HCT116 (cell line): ENCODE measurements at regions of chr22 and their contacts with region 1.

Region 1: GRCh38 chr22:37792494-37792893 is 15.2 kb upstream of the GCAT start:
- DNase-seq: no peak
- ATAC-seq: no peak
- H3K4me3 ChIP-seq: no peak overlapping the region
- H3K27ac ChIP-seq: no peak overlapping the region; the same call in 1 of the 2 replicates
- H3K4me1 ChIP-seq: peaks cover 9 to 39% of the 10 kb centered on the region in 2 experiments; a peak in 3 of 4 replicates
- H3K27me3 ChIP-seq: no peaks in the 10 kb centered on the region
- CTCF ChIP-seq: no peak
- POLR2A ChIP-seq: no peak
- RAD21 ChIP-seq: no peak

Region 2: GRCh38 chr22:37623075-37624016 is 169.1 kb before region 1 on chr22:
- CTCF ChIA-PET with region 1: no interaction called
- POLR2A ChIA-PET with region 1: no interaction called
- RAD21 ChIA-PET with region 1: no interaction called
- intact Hi-C with region 1: loop called (anchors 5 kb)
- DNase-seq: no peak
- ATAC-seq: peak; percentile 86
- H3K4me3 ChIP-seq: no peak overlapping the region
- H3K27ac ChIP-seq: peak overlapping the region; percentile 8; the same call in 1 of the 2 replicates
- H3K4me1 ChIP-seq: no peaks in the 10 kb centered on the region; a peak in 1 of 4 replicates
- H3K27me3 ChIP-seq: no peaks in the 10 kb centered on the region
- CTCF ChIP-seq: peak; percentile 64 to 92 (median 86); a peak in 5 of 6 replicates
- POLR2A ChIP-seq: no peak
- RAD21 ChIP-seq: peak; percentile 71

Region 3: GRCh38 chr22:37643225-37643847 is 149.2 kb before region 1 on chr22:
- CTCF ChIA-PET with region 1: interaction called, 14 read pairs
- POLR2A ChIA-PET with region 1: interaction called, 3 read pairs
- RAD21 ChIA-PET with region 1: interaction called in 1 of 2 experiments, 3 read pairs
- intact Hi-C with region 1: loop called (anchors 5 kb)
- DNase-seq: no peak
- ATAC-seq: peak; percentile 73
- H3K4me3 ChIP-seq: no peak overlapping the region
- H3K27ac ChIP-seq: no peak overlapping the region
- H3K4me1 ChIP-seq: peaks cover 34 to 60% of the 10 kb centered on the region in 2 experiments
- H3K27me3 ChIP-seq: no peaks in the 10 kb centered on the region
- CTCF ChIP-seq: peak; percentile 85 to 94 (median 93)
- POLR2A ChIP-seq: no peak
- RAD21 ChIP-seq: peak; percentile 81

Region 4: GRCh38 chr22:37849089-37849751 is 56.7 kb after region 1 on chr22 and contains the start of gene EIF3L:
- CTCF ChIA-PET with region 1: no interaction called
- POLR2A ChIA-PET with region 1: no interaction called
- RAD21 ChIA-PET with region 1: no interaction called
- intact Hi-C with region 1: no loop called
- DNase-seq: peak; percentile 79
- ATAC-seq: peak; percentile 79
- H3K4me3 ChIP-seq: peak within 1 kb of the TSS; percentile 78 to 91
- H3K27ac ChIP-seq: peak within 1 kb of the TSS; percentile 98
- H3K4me1 ChIP-seq: peaks cover 11 to 27% of the 10 kb centered on the region in 2 experiments
- H3K27me3 ChIP-seq: no peaks in the 10 kb centered on the region
- CTCF ChIP-seq: no peak
- POLR2A ChIP-seq: peak; percentile 65
- RAD21 ChIP-seq: no peak
- total RNA-seq, gene EIF3L: 687 TPM